Common myeloid progenitor, CD34-positive (primary cell): ENCODE measurements at regions of chr5 and their contacts with region 1.

Region 1: DNA sequence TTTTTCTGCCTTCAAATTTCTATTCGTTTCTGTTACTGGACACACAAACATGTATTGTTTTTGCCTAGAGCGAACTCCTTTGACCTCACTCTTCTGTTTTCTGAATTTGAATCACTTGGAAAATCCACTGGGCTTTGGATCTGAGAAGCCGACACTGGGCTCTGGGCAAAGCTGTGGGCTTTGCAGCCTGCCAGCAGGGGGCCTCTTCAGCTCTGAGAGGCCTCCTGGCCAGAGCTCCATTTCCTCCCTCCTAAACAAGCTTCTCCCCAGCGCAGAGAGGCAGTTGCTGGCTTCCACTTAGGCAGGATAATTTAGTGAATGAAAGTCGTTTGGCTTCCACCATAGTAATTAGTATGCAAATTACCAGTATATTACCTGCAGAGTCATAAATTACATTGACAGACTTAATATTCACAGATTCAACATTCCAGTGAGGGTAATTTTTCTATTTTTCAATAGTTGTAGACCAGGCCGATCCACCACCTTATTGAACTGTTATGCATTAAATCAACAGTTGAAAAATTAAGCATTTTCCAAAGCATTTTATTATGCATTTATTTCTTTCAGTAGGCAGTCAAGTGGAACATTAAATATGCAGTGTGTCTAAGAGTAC is 104.0 kb upstream of the ZNF366 start:
- DNase-seq: peak; percentile 53 to 74 (median 72)
- H3K4me3 ChIP-seq: no peak overlapping the region
- H3K27ac ChIP-seq: no peak overlapping the region
- H3K4me1 ChIP-seq: no peaks in the 10 kb centered on the region
- H3K27me3 ChIP-seq: peaks cover 0 to 2% (median 0%) of the 10 kb centered on the region in 5 experiments

Region 2: DNA sequence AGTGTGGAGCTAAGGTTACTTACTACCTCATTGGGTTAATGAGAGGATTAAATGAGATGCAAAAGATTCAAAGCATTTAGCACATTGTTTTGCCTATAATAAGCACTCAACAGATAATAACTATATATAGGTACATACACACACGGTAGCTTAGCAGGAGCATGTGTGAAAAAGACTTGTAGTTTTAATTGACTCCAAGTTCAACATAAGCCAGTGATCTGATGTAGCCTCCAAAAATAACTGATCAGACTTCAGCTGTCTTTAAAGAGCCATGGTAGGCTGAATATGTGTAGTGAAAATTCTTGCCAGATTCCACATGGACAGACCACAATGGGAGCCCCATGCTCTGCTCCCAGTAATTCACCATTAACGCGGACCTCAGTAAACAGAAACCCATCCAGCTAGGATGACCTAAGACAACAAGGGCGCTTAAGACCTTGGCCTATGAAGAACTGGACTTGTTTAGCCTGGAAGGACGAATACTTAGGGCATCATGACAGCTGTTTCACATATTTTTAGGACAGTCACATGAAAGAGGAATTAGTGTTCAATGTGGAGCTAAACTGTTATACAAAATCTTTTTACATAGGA is 11.0 kb after region 1 on chr5:
- CTCF ChIA-PET with region 1: interaction called, 11 read pairs
- POLR2A ChIA-PET with region 1: no interaction called
- DNase-seq: no peak
- H3K4me3 ChIP-seq: no peak overlapping the region
- H3K27ac ChIP-seq: no peak overlapping the region
- H3K4me1 ChIP-seq: no peaks in the 10 kb centered on the region
- H3K27me3 ChIP-seq: peaks cover 0 to 3% (median 0%) of the 10 kb centered on the region in 5 experiments

Region 3: DNA sequence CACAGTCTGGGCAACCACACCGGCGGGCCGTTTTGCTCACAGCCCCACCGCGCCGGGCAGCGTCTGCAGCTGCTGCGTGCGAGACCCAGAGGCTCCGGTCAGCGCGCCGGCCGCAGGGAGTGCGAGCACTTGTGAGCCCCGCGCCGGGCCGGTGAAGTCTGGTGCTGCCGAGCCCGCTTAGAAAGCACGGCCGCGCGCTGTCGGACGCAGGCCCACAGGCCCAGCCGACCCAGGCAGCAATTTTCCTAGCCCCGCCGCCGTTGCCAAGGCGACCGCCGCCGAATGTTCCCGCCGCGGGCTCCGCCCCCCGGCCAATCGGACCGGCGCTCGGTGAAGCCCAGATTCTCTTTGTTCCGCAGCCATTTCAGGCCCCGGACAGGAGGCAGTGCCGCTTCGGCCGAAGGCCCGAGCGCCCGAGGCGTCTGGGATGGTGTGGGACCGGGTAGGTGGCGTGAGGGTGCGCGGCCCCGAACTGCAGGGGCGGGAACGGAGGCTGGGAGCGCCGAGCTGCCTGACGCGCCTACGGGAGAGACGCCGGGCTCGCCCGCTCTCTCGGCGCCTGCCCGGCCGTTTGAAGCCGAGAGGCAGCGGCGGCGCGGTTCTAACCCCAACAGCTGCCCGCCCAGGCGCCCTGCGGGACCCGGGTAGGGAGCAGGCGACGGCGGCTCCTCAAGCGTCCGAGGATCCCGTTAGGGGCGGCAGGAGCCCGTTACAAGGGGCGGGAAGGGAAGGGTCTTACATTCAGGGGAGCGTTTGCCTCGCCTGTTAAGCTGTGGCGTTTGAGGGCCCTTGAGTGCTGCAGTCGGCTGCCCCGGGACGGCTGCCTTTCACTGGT is 205.3 kb after region 1 on chr5 and contains the start of gene TNPO1:
- CTCF ChIA-PET with region 1: interaction called, 36 read pairs
- POLR2A ChIA-PET with region 1: no interaction called
- DNase-seq: peak; percentile 84 to 93 (median 92)
- H3K4me3 ChIP-seq: peak within 1 kb of the TSS; percentile 83 to 98 (median 91)
- H3K27ac ChIP-seq: peak within 1 kb of the TSS; percentile 98 to 99
- H3K4me1 ChIP-seq: peaks cover 7 to 31% (median 18%) of the 10 kb centered on the region in 4 experiments
- H3K27me3 ChIP-seq: no peaks in the 10 kb centered on the region